ENCODE measurements at regions of chr19 and their contacts with region 1.

Region 1: DNA sequence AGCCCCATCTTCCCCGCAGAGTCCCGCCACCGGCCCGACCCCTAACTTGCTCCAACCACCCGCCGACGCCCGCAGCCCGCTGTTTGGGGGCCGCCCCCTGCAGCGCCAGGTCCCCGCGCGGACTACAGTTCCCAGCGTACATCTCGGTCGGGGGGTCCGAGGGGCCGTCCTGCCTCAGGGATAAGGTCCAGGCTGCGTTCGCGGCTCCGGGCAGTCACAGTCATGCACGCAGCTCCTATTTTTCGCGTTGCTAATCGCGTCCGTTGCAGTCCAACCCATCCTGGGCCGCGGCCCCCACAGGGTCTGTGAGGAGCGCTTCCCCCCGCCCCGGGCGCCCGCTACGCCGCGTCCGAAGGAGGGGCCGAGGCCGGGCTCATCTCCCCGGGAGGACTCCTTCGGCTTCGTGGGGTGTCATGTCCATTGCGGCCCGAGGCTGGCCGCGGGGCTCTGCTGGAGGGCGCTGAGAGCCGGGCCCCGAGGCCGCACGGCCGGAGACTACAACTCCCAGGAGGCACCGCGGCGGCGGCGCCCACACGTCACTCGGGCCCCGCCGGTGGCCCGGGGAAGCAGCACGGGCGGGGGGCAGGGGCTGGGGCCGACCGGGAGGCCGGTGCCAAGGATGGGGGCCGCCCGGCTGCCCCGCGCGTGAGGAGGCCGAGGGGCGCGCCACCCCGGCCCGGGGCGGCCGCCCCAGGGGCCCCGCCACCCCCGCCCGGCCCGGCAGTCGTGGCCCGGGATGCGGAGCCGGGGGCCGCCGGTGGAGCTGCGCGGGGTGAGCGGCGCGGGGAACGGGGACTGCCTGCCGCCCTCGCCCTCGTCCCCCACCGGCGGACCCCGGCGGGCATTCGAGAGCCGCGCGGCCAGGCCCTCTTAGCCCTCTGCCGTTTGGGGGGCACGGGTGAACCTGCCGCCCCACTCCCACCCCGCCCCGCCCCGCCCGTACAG is at the start of gene MAP3K10:
- DNase-seq: peak; percentile 89
- ATAC-seq: peak; percentile 88
- H3K4me3 Mint-ChIP-seq: peak within 1 kb of the TSS; percentile 80
- H3K27ac Mint-ChIP-seq: peak within 1 kb of the TSS; percentile 92
- H3K4me1 Mint-ChIP-seq: peaks cover 20% of the 10 kb centered on the region
- H3K27me3 Mint-ChIP-seq: no peaks in the 10 kb centered on the region
- total RNA-seq, gene MAP3K10: 8.7 to 10.8 TPM

Region 2: DNA sequence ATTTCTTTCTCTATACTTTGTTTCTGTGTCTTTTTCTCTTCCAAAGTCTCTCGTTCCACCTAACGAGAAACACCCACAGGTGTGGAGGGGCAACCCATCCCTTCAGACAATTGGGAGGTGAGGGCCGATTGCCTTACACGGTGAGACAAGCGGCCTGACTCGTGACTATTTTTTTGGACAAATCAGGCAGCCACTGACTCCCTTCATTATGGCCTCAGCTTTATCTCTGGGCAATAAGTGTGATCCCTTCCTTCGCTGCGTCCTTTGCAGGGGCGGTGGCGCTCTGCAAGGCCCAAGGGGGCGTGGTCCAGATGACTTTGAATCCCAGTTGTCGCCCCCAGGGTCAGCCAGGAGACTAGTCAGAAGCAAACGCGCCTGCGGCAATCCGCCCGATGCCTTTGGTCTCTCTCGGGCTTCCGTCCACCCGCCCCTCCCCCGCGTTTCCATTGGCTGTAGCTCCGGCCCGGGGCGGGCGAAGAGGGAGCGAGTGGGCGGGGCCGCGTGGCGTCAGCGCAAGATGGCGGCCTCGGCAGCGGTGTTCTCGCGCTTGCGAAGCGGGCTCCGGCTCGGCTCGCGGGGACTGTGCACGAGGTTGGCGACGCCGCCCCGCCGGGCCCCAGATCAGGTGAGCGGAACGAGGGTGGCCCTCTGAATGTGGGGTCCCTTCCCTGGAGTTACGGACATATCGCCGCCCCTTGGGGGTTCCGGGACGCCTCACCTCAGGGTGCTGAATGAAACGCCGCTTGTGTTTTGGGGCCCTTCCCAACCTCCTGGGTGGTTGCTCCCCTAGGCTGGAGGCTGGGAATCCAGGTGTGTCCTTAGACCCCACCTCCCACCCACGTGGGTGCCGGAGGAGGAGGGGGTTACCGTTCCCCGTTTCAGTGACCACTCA is 710.6 kb before region 1 on chr19 and contains the start of gene TIMM50:
- CTCF ChIA-PET with region 1: no interaction called
- POLR2A ChIA-PET with region 1: no interaction called
- intact Hi-C with region 1: loop called in 1 of 2 experiments (anchors 2 kb)
- DNase-seq: peak; percentile 100
- ATAC-seq: peak; percentile 94
- H3K4me3 Mint-ChIP-seq: peak within 1 kb of the TSS; percentile 95
- H3K27ac Mint-ChIP-seq: peak within 1 kb of the TSS; percentile 92
- H3K4me1 Mint-ChIP-seq: peaks cover 24% of the 10 kb centered on the region
- H3K27me3 Mint-ChIP-seq: no peaks in the 10 kb centered on the region
- total RNA-seq, gene TIMM50: 99.4 to 126 TPM

Region 3: GRCh38 chr19:39824143-39825092 is 366.7 kb before region 1 on chr19:
- CTCF ChIA-PET with region 1: no interaction called
- POLR2A ChIA-PET with region 1: no interaction called
- intact Hi-C with region 1: loop called in 1 of 2 experiments (anchors 1 kb)
- DNase-seq: peak; percentile 94
- ATAC-seq: peak; percentile 100
- H3K4me3 Mint-ChIP-seq: no peak overlapping the region
- H3K27ac Mint-ChIP-seq: no peak overlapping the region
- H3K4me1 Mint-ChIP-seq: peaks cover 6% of the 10 kb centered on the region
- H3K27me3 Mint-ChIP-seq: no peaks in the 10 kb centered on the region

Region 4: DNA sequence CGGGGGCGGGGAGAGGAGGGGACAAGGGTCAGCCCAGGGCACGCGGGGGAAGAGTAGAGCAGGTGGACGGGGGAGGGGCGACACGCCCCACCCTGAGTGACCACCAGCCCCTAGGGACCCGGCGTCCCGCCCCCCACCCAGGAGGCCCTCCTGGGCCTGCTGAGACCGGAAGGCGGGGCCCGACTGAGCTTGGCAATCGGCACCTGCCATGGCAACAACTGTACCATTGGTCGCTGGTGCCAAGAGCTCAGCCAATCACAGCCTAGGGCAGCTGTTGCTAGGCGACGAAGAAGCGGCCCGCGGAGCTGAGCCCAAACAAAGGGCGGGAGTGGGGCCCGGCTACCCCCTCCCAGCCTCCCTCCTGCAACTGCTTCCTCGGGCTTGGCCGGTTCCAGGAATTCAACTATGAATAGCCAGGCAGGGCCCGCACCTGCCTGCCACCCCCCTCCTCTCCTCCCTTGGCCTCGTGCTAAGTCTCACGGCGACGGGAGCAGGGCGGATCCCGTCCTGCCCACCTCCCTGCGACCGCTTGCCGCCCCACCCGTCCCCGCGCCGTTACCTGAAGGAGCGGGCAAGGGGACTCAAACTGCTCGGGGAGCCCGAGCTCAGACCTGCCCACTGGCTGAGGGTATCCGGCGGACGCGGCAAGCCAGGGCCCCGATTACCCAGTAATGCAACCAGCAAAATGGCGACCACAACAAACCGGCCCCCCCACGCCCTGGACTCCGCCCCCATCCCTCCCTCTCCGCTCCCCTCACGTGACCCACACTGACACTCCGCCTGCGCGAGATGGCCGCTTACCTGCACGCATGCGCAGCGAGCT is 357.5 kb before region 1 on chr19 and contains the start of gene DYRK1B:
- CTCF ChIA-PET with region 1: no interaction called
- POLR2A ChIA-PET with region 1: no interaction called
- intact Hi-C with region 1: loop called in 1 of 2 experiments (anchors 2 kb)
- DNase-seq: peak; percentile 99
- ATAC-seq: peak; percentile 92
- H3K4me3 Mint-ChIP-seq: peak within 1 kb of the TSS; percentile 64
- H3K27ac Mint-ChIP-seq: peak within 1 kb of the TSS; percentile 84
- H3K4me1 Mint-ChIP-seq: peaks cover 25% of the 10 kb centered on the region
- H3K27me3 Mint-ChIP-seq: no peaks in the 10 kb centered on the region
- total RNA-seq, gene DYRK1B: 4.8 to 6.9 TPM

Region 5: DNA sequence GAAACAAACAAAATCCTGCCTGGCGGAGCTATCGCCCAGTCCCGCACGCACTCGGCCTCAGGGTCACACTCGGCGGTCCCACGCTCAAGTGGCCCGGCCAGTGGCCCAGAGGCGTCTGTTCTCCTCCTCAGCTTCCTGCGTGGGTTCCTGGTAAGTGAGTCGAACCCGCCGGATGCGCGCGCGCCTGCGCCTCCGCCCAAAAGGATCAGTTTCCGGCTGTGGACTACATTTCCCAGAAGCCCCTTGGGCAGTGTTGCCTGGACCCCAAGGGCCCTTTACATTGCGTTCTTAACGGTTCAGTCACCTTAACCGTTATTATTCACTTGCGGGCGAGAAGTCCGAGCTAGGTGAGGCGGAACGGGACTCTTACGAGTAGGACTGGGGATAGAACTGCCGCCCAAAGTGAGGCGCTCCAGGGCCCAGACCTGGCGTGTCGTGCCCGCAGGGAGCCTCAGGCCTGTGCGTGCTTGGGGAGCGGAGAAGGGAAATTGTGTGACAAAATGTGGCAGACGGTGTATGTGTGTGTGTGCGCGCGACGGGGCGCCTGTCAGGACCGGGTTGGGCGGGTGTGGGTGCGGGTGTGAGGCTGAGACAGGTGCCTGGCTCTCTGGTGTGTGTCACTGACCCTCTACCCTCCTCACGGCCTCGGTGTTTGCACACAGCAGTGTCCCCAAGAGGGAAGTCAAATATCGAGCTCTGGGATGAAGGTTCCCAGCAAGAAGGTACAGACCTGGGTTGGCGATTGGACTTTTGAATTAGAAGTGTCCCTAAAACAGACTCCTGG is 194.2 kb before region 1 on chr19 and contains the start of gene ZNF546:
- CTCF ChIA-PET with region 1: no interaction called
- POLR2A ChIA-PET with region 1: no interaction called
- intact Hi-C with region 1: loop called in 1 of 2 experiments (anchors 1 kb)
- DNase-seq: peak; percentile 94
- ATAC-seq: peak; percentile 90
- H3K4me3 Mint-ChIP-seq: peak within 1 kb of the TSS; percentile 90
- H3K27ac Mint-ChIP-seq: peak within 1 kb of the TSS; percentile 99
- H3K4me1 Mint-ChIP-seq: peaks cover 48% of the 10 kb centered on the region
- H3K27me3 Mint-ChIP-seq: no peaks in the 10 kb centered on the region
- total RNA-seq, gene ZNF546: 6.3 to 6.9 TPM

Region 6: DNA sequence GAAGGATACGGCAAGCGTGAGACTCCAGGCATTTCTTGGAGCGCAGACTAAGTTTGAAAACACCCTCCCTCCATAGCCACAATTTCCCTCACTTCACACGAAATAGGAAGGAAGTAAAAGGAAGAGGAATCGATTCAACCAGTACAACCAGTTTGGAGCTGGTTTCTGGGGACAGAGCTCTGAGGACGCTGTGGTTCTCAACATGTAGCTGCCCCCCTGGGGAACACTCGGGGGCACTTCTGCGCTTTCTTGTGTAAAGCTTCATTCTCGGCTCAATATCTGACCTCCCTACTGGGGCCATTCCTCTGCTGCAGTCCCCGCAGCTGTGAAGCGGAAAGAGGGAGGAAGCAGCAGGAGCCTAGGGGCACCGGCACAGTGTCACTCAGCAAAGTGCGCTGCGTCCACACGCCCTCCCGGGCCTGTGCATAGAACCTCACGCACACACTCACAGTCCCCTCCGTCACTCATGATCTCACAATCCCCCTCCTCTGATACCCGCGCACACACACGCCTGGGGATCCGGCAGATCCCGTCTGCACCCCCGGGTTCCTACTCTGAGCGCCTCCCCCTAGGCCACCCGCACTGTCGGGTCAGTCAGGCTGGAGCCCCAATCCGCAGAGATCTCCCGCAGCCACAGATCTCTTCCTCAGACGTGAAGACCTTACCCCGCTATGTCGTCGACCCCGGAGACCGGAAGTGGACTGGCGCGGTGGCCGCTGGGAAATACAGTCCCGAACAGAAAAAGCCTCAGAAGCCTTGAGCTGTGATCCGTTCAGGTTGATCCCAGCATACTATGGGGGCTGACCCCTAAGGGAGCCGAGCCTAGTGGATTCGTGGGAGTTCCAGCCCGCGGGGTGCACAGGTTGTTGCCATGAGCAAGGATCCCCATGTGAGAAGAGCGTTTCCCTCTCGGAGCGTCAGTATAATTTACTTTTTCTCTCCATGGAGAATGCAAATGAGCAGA is 100.6 kb before region 1 on chr19 and contains the start of gene ZNF780A:
- CTCF ChIA-PET with region 1: interaction called, 3 read pairs
- POLR2A ChIA-PET with region 1: no interaction called
- intact Hi-C with region 1: loop called in 1 of 2 experiments (anchors 1 kb)
- DNase-seq: peak; percentile 88
- ATAC-seq: peak; percentile 94
- H3K4me3 Mint-ChIP-seq: peak within 1 kb of the TSS; percentile 97
- H3K27ac Mint-ChIP-seq: peak within 1 kb of the TSS; percentile 100
- H3K4me1 Mint-ChIP-seq: peaks cover 34% of the 10 kb centered on the region
- H3K27me3 Mint-ChIP-seq: peaks cover 5% of the 10 kb centered on the region
- total RNA-seq, gene ZNF780A: 19.2 to 19.4 TPM

Region 7: GRCh38 chr19:40221858-40222837 is 31.0 kb after region 1 on chr19:
- CTCF ChIA-PET with region 1: interaction called, 6 read pairs
- POLR2A ChIA-PET with region 1: no interaction called
- intact Hi-C with region 1: loop called in 1 of 2 experiments (anchors 2 kb)
- DNase-seq: peak; percentile 84
- ATAC-seq: peak; percentile 85
- H3K4me3 Mint-ChIP-seq: no peak overlapping the region
- H3K27ac Mint-ChIP-seq: no peak overlapping the region
- H3K4me1 Mint-ChIP-seq: peaks cover 13% of the 10 kb centered on the region
- H3K27me3 Mint-ChIP-seq: peaks cover 57% of the 10 kb centered on the region

Region 8: DNA sequence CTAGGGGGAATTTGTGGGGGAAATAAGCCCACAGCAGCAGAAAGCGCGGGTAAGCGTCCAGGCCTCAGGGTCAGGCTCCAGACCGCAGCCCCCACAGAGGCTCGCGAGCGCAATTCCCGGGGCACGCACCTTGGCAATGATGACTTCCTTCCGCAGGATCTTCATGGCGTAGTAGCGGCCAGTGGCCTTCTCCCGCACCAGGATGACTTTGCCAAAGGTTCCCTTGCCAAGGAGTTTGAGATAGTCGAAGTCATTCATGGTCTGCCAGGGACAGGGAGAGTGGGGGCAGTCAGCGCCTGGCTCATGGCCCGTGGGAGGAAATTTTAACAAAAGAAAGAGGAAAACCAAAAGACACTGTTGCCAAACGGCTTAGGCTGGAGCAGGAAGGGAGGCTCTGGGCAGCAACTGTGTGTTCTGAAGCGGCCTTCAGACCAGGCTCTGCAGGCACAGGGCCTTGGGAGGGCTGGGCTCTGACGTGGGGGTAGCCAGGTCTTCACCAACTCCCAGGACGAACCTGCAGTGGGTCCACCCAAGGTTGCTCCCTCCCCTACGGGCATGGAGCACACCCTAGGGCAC is 50.7 kb after region 1 on chr19:
- CTCF ChIA-PET with region 1: no interaction called
- POLR2A ChIA-PET with region 1: no interaction called
- intact Hi-C with region 1: no loop called
- DNase-seq: no peak
- ATAC-seq: no peak
- H3K4me3 Mint-ChIP-seq: no peak overlapping the region
- H3K27ac Mint-ChIP-seq: no peak overlapping the region
- H3K4me1 Mint-ChIP-seq: no peaks in the 10 kb centered on the region
- H3K27me3 Mint-ChIP-seq: no peaks in the 10 kb centered on the region

Region 9: DNA sequence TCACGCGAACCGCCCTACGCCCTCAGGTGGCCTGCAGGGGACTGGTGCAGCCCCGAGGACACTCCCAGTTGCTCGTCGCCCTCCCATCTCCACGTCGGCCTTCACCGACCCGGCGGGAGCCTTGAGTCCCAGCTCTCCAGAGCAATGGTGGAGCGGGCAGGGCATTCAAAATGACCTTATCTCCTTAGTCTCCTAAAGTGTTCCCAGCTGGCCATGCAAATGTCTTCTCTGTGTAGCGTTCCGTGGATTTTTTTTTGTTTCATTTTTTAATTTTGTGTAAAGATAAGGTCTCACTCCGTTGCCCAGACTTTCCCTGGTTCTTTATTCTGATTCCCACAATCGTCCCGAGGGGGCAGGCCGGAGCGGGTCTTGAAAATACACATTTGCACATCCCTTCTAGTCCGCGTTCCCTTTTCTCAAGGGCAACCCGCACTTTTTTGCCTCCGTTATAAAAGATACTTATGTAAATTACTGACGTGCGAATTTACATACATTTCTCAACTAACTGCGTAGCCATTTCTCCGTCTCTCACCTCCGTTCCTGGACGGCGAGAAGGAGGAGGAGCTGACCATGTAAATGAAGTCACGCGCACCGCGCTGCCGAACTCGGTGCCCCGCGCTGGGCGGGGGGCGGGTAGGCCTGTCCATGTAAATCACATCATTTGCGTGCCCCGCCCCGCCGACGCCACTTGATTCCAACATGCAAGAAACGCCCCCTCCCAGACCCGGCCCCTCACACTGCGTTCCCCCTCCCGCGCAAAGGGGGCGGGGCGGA is 607.2 kb after region 1 on chr19:
- CTCF ChIA-PET with region 1: no interaction called
- POLR2A ChIA-PET with region 1: no interaction called
- intact Hi-C with region 1: no loop called
- DNase-seq: peak; percentile 100
- ATAC-seq: peak; percentile 82
- H3K4me3 Mint-ChIP-seq: peak overlapping the region; percentile 91
- H3K27ac Mint-ChIP-seq: peak overlapping the region; percentile 97
- H3K4me1 Mint-ChIP-seq: peaks cover 49% of the 10 kb centered on the region
- H3K27me3 Mint-ChIP-seq: no peaks in the 10 kb centered on the region

Measured in activated CD4-positive, alpha-beta T cell treated with anti-CD3 and anti-CD28 coated beads for 36 hours (primary cell).